GM18951 (cell line): ENCODE measurements at regions of chr7 and their contacts with region 1.

Region 1: GRCh38 chr7:142873281-142873787 is 12.2 kb downstream of the TRPV6 start:
- POLR2A ChIP-seq: no peak

Region 2: DNA sequence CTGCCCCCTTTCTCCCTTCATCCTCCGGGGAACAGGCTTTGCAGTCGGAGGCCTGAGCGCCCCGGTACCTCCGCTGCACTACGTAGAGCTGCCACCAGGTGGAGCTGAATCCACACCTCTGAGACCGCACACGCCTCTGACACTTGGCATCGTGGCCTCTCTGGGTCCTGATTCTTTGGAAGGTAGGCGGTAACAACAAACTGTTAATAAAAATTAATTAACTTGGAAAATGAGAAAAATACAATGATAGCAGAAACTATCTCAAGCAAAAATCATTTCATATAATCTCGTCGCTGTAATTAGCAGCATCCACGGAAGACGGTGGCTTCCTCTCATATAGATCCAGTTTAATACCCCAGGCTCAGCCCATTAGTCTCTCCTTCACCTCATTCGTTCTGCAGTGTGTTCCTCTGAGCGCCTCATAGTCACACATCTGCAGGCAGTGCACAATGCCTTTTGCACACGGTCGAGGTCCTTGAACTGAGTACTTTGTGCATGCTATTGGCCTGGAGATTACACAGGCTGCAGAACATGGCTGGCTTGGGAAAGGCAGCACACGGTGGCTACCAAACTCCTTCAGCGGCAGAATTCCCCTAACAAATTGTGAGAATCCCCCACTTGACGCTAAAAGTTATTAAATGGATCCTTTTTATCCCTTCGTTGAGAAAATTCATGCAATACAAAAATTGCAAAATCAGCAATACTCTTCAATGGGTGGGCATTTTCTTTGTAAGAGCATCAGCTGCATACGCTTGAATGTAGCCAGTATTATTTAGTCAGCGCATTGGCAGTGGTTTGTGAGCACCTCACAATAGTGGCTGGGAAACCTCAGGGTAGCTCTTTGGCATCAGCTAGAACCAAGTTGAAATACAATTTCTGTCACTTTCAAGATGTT is 134.9 kb after region 1 on chr7:
- in situ Hi-C with region 1: loop called (anchors 10 kb)
- POLR2A ChIP-seq: no peak

Region 3: GRCh38 chr7:143147072-143147694 is 273.8 kb after region 1 on chr7:
- in situ Hi-C with region 1: no loop called
- POLR2A ChIP-seq: no peak